ENCODE measurements at regions of chr2 and their contacts with region 1.

Region 1: DNA sequence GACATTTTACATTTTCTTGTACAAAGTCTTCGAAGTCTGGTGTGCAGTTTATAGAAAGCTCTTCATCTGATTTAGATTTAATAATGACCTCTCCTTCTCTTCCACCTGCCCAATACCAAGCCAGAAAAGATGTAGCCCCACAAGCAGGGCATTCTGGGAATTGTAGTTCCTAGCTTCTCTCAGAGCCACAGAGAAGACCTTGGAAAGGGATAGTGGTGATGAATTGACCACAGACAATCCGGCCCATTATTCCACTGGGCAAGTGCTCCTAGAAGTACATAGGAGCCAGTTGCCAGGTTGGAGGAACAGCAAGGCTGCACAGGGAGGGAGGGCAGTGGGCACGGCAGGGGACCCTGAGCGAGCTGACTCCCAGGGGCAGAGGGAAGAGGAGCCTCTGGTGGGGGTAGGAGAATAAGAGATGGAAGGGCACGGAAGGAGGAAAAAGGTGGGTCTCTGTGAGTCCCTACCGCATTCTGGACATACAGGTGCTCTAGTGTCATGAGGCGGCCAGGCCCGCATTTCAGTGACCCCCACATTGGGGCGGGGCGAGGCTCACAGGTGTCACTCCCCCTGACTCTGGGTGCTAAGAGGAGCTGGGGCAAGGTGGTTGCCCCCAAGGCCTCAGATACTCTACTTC is 152.5 kb upstream of the HAAO start:
- DNase-seq: no peak
- ATAC-seq: no peak
- H3K4me3 ChIP-seq: no peak overlapping the region
- H3K27ac ChIP-seq: no peak overlapping the region
- H3K4me1 ChIP-seq: peaks cover 5 to 10% of the 10 kb centered on the region in 2 donors
- H3K27me3 ChIP-seq: no peaks in the 10 kb centered on the region
- CTCF ChIP-seq: no peak
- POLR2A ChIP-seq: no peak

Region 2: DNA sequence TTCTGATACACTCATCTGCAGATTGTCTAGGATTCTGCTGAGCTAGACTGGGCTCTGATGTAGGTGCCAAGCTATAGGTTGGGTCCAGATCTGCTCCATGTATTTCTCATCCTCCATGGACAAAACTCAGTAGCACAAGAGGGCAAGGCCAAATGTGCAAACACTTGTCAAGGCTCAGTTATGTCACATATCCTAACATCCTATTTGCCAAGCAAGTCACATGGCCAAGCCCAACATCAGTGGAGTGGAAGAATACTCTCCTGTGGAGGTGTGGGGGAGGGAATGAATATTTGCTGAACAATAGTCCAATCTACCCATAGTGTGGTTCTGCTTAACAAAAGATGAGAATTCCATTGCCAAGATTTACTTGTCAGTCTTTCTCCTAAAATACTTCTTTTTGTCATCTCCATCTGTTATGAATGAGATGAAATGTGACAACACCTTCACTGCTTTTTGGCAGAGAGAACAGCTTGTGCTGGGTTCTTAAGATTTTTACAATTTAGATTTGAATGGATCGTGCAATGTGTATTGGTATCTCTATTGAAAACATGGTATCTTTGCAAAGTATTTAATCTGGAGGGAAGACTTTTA is 270.8 kb before region 1 on chr2:
- in situ Hi-C with region 1: no loop called
- intact Hi-C with region 1: no loop called
- DNase-seq: no peak
- ATAC-seq: no peak
- H3K4me3 ChIP-seq: no peak overlapping the region
- H3K27ac ChIP-seq: no peak overlapping the region
- H3K4me1 ChIP-seq: peaks cover 0 to 5% of the 10 kb centered on the region in 2 donors
- H3K27me3 ChIP-seq: no peaks in the 10 kb centered on the region
- CTCF ChIP-seq: no peak
- POLR2A ChIP-seq: no peak

Region 3: GRCh38 chr2:43542285-43542937 is 597.5 kb after region 1 on chr2:
- in situ Hi-C with region 1: no loop called
- intact Hi-C with region 1: loop called (anchors 2 kb)
- DNase-seq: no peak
- ATAC-seq: no peak
- H3K4me3 ChIP-seq: no peak overlapping the region
- H3K27ac ChIP-seq: no peak overlapping the region
- H3K4me1 ChIP-seq: peaks cover 6 to 11% of the 10 kb centered on the region in 2 donors
- H3K27me3 ChIP-seq: no peaks in the 10 kb centered on the region
- CTCF ChIP-seq: peak; percentile 52 to 63 (median 61)
- POLR2A ChIP-seq: no peak

Region 4: GRCh38 chr2:43576981-43577892 is 632.3 kb after region 1 on chr2:
- in situ Hi-C with region 1: no loop called
- intact Hi-C with region 1: loop called (anchors 5 kb)
- DNase-seq: no peak
- ATAC-seq: peak in 1 of 2 donors; percentile 27
- H3K4me3 ChIP-seq: no peak overlapping the region
- H3K27ac ChIP-seq: no peak overlapping the region
- H3K4me1 ChIP-seq: peaks cover 0 to 6% of the 10 kb centered on the region in 2 donors
- H3K27me3 ChIP-seq: no peaks in the 10 kb centered on the region
- CTCF ChIP-seq: peak in 4 of 5 experiments; percentile 33 to 75 (median 54)
- POLR2A ChIP-seq: no peak

Measured in gastrocnemius medialis (tissue), 4 donors.